Colonic mucosa (tissue), 4 donors: ENCODE measurements at regions of chr5 and their contacts with region 1.

Region 1: DNA sequence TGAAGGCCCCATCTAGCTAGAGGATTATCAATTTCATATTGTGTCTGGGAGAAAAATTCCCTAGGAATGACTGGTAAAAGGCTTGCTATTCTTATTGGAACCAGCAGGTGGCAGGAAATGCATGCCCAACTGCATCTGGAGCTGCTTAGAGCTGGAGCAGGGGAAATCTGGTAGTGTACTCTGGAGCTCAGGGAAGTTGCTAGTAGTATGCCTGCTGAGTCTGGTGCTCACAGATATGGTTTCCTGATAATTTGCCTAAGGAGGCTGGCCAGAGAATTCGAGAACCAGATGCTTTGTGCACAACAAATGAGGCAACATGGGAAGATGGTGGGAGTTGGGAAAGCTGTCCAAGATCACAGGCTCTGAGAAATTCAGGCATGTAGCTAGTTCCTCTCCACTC is 53.7 kb downstream of the G3BP1 start:
- DNase-seq: peak; percentile 65
- H3K4me3 ChIP-seq: no peak overlapping the region
- H3K27ac ChIP-seq: no peak overlapping the region
- H3K4me1 ChIP-seq: no peaks in the 10 kb centered on the region
- H3K27me3 ChIP-seq: no peaks in the 10 kb centered on the region
- CTCF ChIP-seq: peak; percentile 88

Region 2: GRCh38 chr5:152142840-152143469 is 317.5 kb after region 1 on chr5:
- intact Hi-C with region 1: loop called (anchors 1 kb)
- DNase-seq: peak; percentile 31
- H3K4me3 ChIP-seq: no peak overlapping the region
- H3K27ac ChIP-seq: no peak overlapping the region
- H3K4me1 ChIP-seq: no peaks in the 10 kb centered on the region
- H3K27me3 ChIP-seq: no peaks in the 10 kb centered on the region
- CTCF ChIP-seq: peak; percentile 72

Region 3: DNA sequence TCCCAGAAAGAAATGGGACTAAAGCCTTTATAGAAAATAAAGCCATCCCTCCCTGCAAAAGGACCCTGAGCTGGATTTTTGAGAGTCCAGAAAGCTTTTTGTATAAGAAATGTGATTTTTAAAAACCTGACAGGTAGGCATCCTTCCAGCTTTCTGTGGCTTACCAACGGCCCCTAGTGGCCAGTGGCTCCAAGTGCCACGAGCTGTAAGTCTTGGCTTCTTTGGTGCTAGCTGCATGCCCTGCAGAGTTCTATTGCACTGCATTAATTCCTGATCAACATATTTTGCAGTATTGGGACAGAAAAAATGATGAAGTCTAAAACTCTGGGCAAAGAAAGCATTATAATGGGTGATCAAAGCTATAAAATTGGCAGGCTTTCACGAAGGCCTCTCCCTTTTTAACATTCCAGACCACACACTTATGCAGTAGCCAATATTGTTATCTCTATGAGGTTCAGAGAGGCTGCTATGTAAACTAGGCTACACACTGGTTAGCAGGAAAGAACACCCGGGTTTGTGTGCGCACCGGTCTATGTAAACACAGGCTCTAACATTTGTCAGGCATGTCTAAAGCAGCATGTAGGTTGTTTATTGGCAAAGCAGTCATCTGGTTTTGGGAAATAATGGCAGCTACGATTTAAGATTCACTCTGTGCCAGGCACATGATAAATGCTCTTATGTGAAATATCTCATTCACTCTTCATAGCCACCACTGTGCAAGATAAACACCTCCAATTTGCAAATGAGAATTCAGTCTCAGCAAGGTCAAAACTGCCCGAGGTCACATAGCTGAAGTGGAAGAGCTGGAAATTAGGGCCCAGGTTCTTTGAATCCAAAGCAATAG is 524.5 kb after region 1 on chr5:
- intact Hi-C with region 1: loop called (anchors 10 kb)
- DNase-seq: peak; percentile 30
- H3K4me3 ChIP-seq: no peak overlapping the region
- H3K27ac ChIP-seq: no peak overlapping the region
- H3K4me1 ChIP-seq: no peaks in the 10 kb centered on the region
- H3K27me3 ChIP-seq: no peaks in the 10 kb centered on the region
- CTCF ChIP-seq: peak; percentile 65